ENCODE measurements at regions of chr13 and their contacts with region 1.

Region 1: GRCh38 chr13:51380269-51380668 is 40.8 kb downstream of the SERPINE3 start:
- DNase-seq: no peak
- H3K4me3 Mint-ChIP-seq: no peak overlapping the region
- H3K27ac Mint-ChIP-seq: no peak overlapping the region
- H3K4me1 Mint-ChIP-seq: no peaks in the 10 kb centered on the region
- H3K27me3 Mint-ChIP-seq: no peaks in the 10 kb centered on the region

Region 2: GRCh38 chr13:51419001-51419636 is 38.9 kb after region 1 on chr13:
- intact Hi-C with region 1: loop called (anchors 5 kb)
- DNase-seq: no peak
- H3K4me3 Mint-ChIP-seq: no peak overlapping the region
- H3K27ac Mint-ChIP-seq: no peak overlapping the region
- H3K4me1 Mint-ChIP-seq: peaks cover 57% of the 10 kb centered on the region
- H3K27me3 Mint-ChIP-seq: no peaks in the 10 kb centered on the region